Activated CD4-positive, alpha-beta T cell treated with anti-CD3 and anti-CD28 coated beads, Interleukin-2, amount 10 ng/mL, durations not matched to agents 7 days and 5 days (primary cell): ENCODE measurements at regions of chr4 and their contacts with region 1.

Region 1: GRCh38 chr4:107989537-107990386 is at the start of gene HADH:
- DNase-seq: peak; percentile 94
- H3K4me3 Mint-ChIP-seq: peak within 1 kb of the TSS; percentile 82
- H3K27ac Mint-ChIP-seq: peak within 1 kb of the TSS; percentile 92
- H3K4me1 Mint-ChIP-seq: peaks cover 43% of the 10 kb centered on the region
- H3K27me3 Mint-ChIP-seq: no peaks in the 10 kb centered on the region
- total RNA-seq, gene HADH: 68.1 to 73.1 TPM

Region 2: DNA sequence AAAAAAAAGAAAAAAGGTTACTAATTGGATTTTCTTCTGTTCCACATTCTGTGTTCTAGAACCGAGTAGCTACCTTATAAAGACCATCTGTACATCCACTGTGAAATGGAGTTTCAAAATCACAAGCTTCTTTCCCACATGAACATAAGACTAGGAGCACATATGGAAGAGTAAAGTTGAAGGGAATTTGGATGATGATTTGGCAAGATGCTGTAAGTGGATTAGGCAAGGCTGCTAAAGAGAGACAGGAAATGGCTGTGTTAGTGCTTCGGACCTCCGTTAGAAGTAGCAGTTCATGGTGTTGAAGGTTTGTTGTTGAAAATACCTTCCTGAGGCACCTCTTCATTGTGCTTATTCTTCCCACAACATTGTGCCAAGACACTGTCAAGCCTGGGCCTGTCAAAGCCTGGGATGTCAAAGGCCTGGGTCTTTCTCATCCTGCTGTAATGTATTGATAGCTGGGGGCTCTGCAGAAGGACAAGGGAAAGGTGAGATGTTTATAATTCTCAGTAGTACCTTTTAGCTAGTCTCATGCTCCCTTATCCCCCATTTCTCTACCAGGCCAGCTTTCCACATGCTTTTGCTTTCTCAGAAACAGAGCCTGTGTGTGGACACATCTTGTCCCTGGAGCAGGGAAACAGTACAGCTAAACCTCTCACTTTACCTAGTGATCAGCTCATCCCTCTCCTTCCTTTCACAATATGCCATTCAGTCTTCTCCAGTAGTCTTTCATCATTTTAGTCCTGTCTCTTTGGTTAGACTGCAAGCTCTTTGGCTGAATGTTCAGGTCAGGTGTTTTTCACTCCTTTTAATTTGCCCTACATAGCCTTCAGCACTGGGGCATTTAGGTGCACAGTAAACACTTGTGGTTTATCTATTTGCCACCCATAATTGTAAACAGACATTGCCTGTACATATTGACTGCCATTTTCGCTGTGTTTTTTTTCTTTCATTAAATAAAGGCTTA is 96.3 kb before region 1 on chr4:
- CTCF ChIA-PET with region 1: no interaction called
- POLR2A ChIA-PET with region 1: interaction called, 10 read pairs
- DNase-seq: no peak
- H3K4me3 Mint-ChIP-seq: no peak overlapping the region
- H3K27ac Mint-ChIP-seq: no peak overlapping the region
- H3K4me1 Mint-ChIP-seq: peaks cover 6% of the 10 kb centered on the region
- H3K27me3 Mint-ChIP-seq: peaks cover 7% of the 10 kb centered on the region

Region 3: GRCh38 chr4:107978716-107979451 is 10.9 kb before region 1 on chr4:
- CTCF ChIA-PET with region 1: no interaction called
- POLR2A ChIA-PET with region 1: no interaction called
- DNase-seq: no peak
- H3K4me3 Mint-ChIP-seq: no peak overlapping the region
- H3K27ac Mint-ChIP-seq: no peak overlapping the region
- H3K4me1 Mint-ChIP-seq: peaks cover 6% of the 10 kb centered on the region
- H3K27me3 Mint-ChIP-seq: no peaks in the 10 kb centered on the region

Region 4: GRCh38 chr4:108003982-108004515 is 14.3 kb after region 1 on chr4:
- CTCF ChIA-PET with region 1: interaction called, 3 read pairs
- POLR2A ChIA-PET with region 1: interaction called, 12 read pairs
- DNase-seq: no peak
- H3K4me3 Mint-ChIP-seq: no peak overlapping the region
- H3K27ac Mint-ChIP-seq: peak overlapping the region; percentile 43
- H3K4me1 Mint-ChIP-seq: peaks cover 36% of the 10 kb centered on the region
- H3K27me3 Mint-ChIP-seq: no peaks in the 10 kb centered on the region